ENCODE measurements at regions of chr7 and their contacts with region 1.

Region 1: DNA sequence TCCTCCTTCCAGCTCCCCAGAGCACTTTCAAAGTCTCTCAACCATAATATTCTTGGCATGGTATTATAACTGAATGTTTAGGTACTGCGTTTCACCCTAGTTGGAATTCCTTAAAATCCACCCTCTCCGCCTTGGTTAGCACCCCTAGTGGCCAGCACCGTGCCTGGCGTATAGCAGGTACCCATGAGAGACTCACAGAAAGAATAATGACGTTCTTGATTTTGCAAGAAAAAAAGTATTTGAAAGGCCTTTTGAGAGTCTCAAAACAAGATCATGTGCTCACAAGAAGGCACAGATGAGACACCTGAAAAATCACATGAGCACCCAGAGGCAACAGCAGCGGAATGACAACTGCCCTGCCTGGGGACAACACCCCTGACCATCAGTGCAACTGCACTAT is 50.8 kb downstream of the GLI3 start:
- DNase-seq: peak; percentile 61
- ATAC-seq: peak; percentile 90
- H3K4me3 Mint-ChIP-seq: no peak overlapping the region
- H3K27ac Mint-ChIP-seq: no peak overlapping the region
- H3K4me1 Mint-ChIP-seq: peaks cover 27% of the 10 kb centered on the region
- H3K27me3 Mint-ChIP-seq: no peaks in the 10 kb centered on the region
- CTCF ChIP-seq: peak; percentile 52

Region 2: DNA sequence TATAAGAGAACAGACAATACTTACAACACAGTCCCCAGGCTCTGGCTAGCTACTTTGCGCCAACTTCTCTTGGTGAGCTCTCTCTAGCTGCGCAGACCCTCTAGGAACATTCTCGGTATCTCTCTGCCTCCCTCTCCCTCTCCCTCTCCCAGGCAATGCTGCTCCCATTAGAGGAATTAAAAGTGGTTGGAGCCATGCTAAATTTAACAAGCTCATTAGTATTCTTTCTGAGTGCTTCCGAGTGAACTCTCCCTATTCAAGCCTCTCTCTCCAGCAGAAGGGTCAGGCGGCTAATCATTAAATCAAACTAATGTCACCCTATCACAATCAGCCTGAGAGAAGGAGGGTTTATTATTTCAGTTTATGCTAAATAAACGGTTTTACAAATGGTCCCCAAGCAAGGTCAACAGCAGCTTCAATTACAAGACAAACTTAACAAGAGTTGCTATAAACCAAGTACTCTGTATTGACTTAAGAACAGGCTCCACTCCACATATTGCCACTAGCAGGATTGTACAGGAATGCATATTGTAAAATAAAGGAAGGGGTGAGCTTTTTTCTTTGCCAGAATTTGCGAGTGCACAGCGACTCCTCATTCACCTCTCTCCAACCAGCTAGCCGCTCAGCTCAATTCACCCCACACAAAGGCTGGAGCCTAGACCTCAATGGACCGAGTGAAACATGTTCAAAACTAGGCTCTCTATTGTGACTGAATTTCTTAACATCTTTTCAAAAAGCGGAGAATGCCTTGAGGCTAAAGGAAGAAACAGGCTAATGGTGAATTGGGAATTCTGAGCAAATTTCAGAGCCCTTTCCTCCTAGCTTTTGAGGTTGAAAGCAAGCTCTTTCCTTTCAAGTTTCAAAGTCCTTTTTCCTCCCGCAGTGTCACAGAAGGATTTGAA is 33.6 kb before region 1 on chr7:
- CTCF ChIA-PET with region 1: interaction called, 12 read pairs
- POLR2A ChIA-PET with region 1: no interaction called
- DNase-seq: no peak
- ATAC-seq: peak; percentile 31; the same call in 1 of the 2 replicates
- H3K4me3 Mint-ChIP-seq: no peak overlapping the region
- H3K27ac Mint-ChIP-seq: no peak overlapping the region
- H3K4me1 Mint-ChIP-seq: peaks cover 22% of the 10 kb centered on the region
- H3K27me3 Mint-ChIP-seq: no peaks in the 10 kb centered on the region
- CTCF ChIP-seq: no peak

Region 3: GRCh38 chr7:42175834-42176723 is 10.1 kb before region 1 on chr7:
- CTCF ChIA-PET with region 1: interaction called, 15 read pairs
- POLR2A ChIA-PET with region 1: no interaction called
- DNase-seq: no peak
- ATAC-seq: no peak
- H3K4me3 Mint-ChIP-seq: no peak overlapping the region
- H3K27ac Mint-ChIP-seq: peak overlapping the region; percentile 27; the same call in 1 of the 2 replicates
- H3K4me1 Mint-ChIP-seq: peaks cover 24% of the 10 kb centered on the region
- H3K27me3 Mint-ChIP-seq: no peaks in the 10 kb centered on the region
- CTCF ChIP-seq: no peak